HEK293T (cell line): ENCODE measurements at regions of chr13 and their contacts with region 1.

Region 1: GRCh38 chr13:73849292-73849691 is 284.9 kb downstream of the KLF12 start:
- DNase-seq: peak; percentile 66

Region 2: GRCh38 chr13:72774019-72774418 is 1075.3 kb before region 1 on chr13:
- CTCF ChIA-PET with region 1: no interaction called
- POLR2A ChIA-PET with region 1: no interaction called
- DNase-seq: no peak

Region 3: GRCh38 chr13:73835138-73835721 is 14.1 kb before region 1 on chr13:
- CTCF ChIA-PET with region 1: interaction called, 10 read pairs
- POLR2A ChIA-PET with region 1: no interaction called
- DNase-seq: peak; percentile 69

Region 4: DNA sequence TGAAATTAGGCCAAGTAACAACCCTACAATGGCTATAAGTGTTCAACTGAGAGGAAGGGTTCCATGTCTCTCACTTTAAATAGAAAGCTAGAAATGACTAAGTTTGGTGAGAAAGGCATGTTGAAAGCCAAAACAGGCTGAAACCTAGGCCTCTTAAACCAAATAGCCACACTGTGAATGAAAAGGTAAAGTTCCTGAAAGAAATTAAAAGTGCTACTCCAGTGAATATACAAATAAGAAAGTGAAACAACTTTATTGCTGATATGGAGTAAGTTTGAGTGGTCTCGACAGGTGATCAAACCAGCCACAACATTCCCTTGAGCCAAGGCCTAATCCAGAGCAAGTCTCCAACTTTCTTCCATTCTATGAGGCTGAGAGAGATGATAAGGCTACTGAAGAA is 75.3 kb after region 1 on chr13:
- CTCF ChIA-PET with region 1: interaction called, 13 read pairs
- POLR2A ChIA-PET with region 1: no interaction called
- DNase-seq: no peak

Region 5: GRCh38 chr13:74210693-74211393 is 361.6 kb after region 1 on chr13:
- CTCF ChIA-PET with region 1: no interaction called
- POLR2A ChIA-PET with region 1: no interaction called
- DNase-seq: peak; percentile 51